ENCODE measurements at regions of chr17 and their contacts with region 1.

Region 1: GRCh38 chr17:51035431-51035830 is 85.2 kb downstream of the SPAG9 start:
- DNase-seq: no peak
- H3K4me3 ChIP-seq: no peak overlapping the region
- H3K27ac ChIP-seq: peak overlapping the region in 3 of 4 donors; percentile 1 to 10 (median 2)
- H3K4me1 ChIP-seq: peaks cover 0 to 12% (median 3%) of the 10 kb centered on the region in 4 donors
- H3K27me3 ChIP-seq: no peaks in the 10 kb centered on the region
- CTCF ChIP-seq: no peak
- EP300 ChIP-seq: no peak
- POLR2A ChIP-seq: no peak

Region 2: GRCh38 chr17:51015145-51015558 is 20.3 kb before region 1 on chr17:
- in situ Hi-C with region 1: no loop called
- intact Hi-C with region 1: loop called (anchors 1 kb)
- DNase-seq: no peak
- H3K4me3 ChIP-seq: no peak overlapping the region
- H3K27ac ChIP-seq: no peak overlapping the region
- H3K4me1 ChIP-seq: peaks cover 0 to 7% (median 0%) of the 10 kb centered on the region in 4 donors
- H3K27me3 ChIP-seq: no peaks in the 10 kb centered on the region
- CTCF ChIP-seq: no peak
- EP300 ChIP-seq: no peak
- POLR2A ChIP-seq: no peak